HepG2 (cell line): ENCODE measurements at regions of chr20 and their contacts with region 1.

Region 1: GRCh38 chr20:39049684-39050554 is 87.8 kb downstream of the DHX35 start:
- DNase-seq: peak; percentile 75
- ATAC-seq: peak; percentile 86
- H3K4me3 ChIP-seq: peak overlapping the region; percentile 63 to 89 (median 76)
- H3K27ac ChIP-seq: no peak overlapping the region
- H3K4me1 ChIP-seq: peaks cover 22% of the 10 kb centered on the region
- H3K27me3 ChIP-seq: peaks cover 0 to 7% of the 10 kb centered on the region in 2 experiments; a peak in 2 of 5 replicates
- CTCF ChIP-seq: peak; percentile 100
- EP300 ChIP-seq: 0 out of 4 replicates have a peak, but pooled peaks of 1 of the 2 experiments have one; percentile 52
- POLR2A ChIP-seq: peak; percentile 70 to 75; a peak in 3 of 4 replicates
- RAD21 ChIP-seq: peak; percentile 99

Region 2: DNA sequence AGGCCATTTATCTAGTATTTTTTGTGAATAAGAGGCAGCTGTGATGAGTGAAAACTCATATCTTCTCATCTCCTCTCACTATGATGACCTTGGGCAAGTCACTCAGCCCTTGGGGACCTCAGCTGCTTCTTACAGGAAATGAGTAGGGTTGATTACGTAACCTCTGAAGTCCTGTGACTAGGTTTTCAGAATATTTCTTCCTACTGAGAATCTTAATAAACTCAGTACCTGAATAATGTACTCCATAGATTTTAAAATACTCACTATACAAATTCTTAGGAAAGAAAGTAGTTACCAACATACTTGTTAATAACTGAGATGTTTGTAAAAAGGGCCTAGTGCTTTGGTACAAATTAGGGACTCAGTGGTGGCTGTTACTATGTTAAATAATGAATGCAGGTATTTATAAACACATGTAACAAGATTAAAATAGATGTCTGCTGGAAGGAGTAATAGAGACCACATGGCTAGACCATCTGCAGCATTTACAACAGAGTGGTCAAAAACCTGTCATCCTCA is 955.5 kb before region 1 on chr20:
- CTCF ChIA-PET with region 1: no interaction called
- POLR2A ChIA-PET with region 1: no interaction called
- in situ Hi-C with region 1: no loop called
- intact Hi-C with region 1: no loop called
- DNase-seq: peak; percentile 52
- ATAC-seq: no peak
- H3K4me3 ChIP-seq: no peak overlapping the region; a peak in 1 of 6 replicates
- H3K27ac ChIP-seq: peak overlapping the region; percentile 66
- H3K4me1 ChIP-seq: peaks cover 49% of the 10 kb centered on the region
- H3K27me3 ChIP-seq: no peaks in the 10 kb centered on the region
- CTCF ChIP-seq: no peak
- EP300 ChIP-seq: 0 out of 4 replicates have a peak, but pooled peaks of 1 of the 2 experiments have one; percentile 57
- POLR2A ChIP-seq: no peak
- RAD21 ChIP-seq: no peak

Region 3: DNA sequence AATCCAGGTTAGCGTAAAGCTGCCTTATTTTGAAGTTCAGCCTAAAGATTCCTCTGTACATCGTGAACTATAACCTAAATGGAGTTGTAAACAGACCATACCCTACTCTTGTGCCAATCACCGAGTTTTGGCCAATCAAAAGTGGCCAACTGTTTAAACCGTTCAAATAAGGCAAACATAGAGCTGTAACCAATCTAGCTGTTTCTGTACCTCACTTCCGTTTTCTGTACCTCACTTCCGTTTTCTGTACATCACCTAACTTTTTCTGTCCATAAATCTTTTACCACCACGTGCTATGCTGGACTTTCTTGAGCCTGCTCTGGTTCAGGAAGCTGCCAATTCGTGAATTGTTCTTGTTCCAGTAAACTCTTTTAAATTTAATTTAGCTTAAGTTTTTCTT is 663.9 kb before region 1 on chr20:
- CTCF ChIA-PET with region 1: no interaction called
- POLR2A ChIA-PET with region 1: no interaction called
- in situ Hi-C with region 1: no loop called
- intact Hi-C with region 1: no loop called
- DNase-seq: no peak
- ATAC-seq: no peak
- H3K4me3 ChIP-seq: no peak overlapping the region
- H3K27ac ChIP-seq: no peak overlapping the region
- H3K4me1 ChIP-seq: no peaks in the 10 kb centered on the region
- H3K27me3 ChIP-seq: peaks cover 0 to 3% of the 10 kb centered on the region in 2 experiments; a peak in 1 of 5 replicates
- CTCF ChIP-seq: no peak
- EP300 ChIP-seq: no peak
- POLR2A ChIP-seq: no peak
- RAD21 ChIP-seq: no peak

Region 4: GRCh38 chr20:38730989-38731737 is 318.8 kb before region 1 on chr20:
- CTCF ChIA-PET with region 1: no interaction called
- POLR2A ChIA-PET with region 1: no interaction called
- in situ Hi-C with region 1: no loop called
- intact Hi-C with region 1: loop called (anchors 1 kb)
- DNase-seq: peak; percentile 62
- ATAC-seq: peak; percentile 85
- H3K4me3 ChIP-seq: peak overlapping the region; percentile 10 to 71 (median 33)
- H3K27ac ChIP-seq: no peak overlapping the region
- H3K4me1 ChIP-seq: peaks cover 15% of the 10 kb centered on the region
- H3K27me3 ChIP-seq: peaks cover 35 to 82% of the 10 kb centered on the region in 2 experiments
- CTCF ChIP-seq: peak; percentile 99
- EP300 ChIP-seq: 0 out of 4 replicates have a peak, but pooled peaks of 1 of the 2 experiments have one; percentile 30
- POLR2A ChIP-seq: no peak
- RAD21 ChIP-seq: peak; percentile 82

Region 5: DNA sequence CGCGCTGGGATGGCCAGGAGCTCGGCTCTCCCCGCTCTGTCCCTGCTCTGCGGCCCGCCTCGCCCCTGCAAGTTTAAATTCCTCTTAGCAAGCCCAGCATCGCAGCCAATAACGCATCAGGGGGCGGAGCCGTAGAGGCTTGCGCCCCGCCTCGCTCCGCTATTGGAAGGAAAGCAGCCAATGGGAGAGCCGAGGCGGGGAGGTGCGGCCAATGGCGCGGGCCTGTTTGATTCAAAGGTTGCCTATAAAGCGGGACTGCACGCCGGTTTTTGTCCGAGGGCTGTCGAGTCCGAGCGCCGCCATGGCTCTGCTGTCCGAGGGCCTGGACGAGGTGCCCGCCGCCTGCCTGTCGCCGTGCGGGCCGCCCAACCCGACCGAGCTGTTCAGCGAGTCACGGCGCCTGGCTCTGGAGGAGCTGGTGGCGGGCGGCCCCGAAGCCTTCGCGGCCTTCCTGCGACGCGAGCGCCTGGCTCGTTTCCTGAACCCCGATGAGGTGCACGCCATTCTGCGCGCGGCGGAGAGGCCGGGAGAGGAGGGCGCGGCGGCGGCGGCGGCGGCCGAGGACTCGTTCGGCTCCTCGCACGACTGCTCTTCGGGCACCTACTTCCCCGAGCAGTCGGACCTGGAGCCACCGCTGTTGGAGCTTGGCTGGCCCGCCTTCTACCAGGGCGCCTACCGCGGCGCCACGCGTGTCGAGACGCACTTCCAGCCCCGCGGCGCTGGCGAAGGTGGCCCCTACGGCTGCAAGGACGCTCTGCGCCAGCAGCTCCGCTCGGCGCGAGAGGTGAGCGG is 123.6 kb before region 1 on chr20 and contains the start of gene FAM83D:
- CTCF ChIA-PET with region 1: interaction called, 21 read pairs
- POLR2A ChIA-PET with region 1: interaction called, 5 read pairs
- in situ Hi-C with region 1: loop called (anchors 5 kb)
- intact Hi-C with region 1: loop called (anchors 1 kb)
- DNase-seq: peak; percentile 99
- ATAC-seq: peak; percentile 93
- H3K4me3 ChIP-seq: peak within 1 kb of the TSS; percentile 85 to 99 (median 95)
- H3K27ac ChIP-seq: peak within 1 kb of the TSS; percentile 73
- H3K4me1 ChIP-seq: peaks cover 57% of the 10 kb centered on the region
- H3K27me3 ChIP-seq: peaks cover 0 to 8% of the 10 kb centered on the region in 2 experiments; a peak in 2 of 5 replicates
- CTCF ChIP-seq: no peak
- EP300 ChIP-seq: peak in 1 of 2 experiments; percentile 40; a peak in 2 of 4 replicates
- POLR2A ChIP-seq: peak; percentile 100
- RAD21 ChIP-seq: peak; percentile 99
- total RNA-seq, gene FAM83D: 64.0 and 76.5 TPM in 2 replicates

Region 6: GRCh38 chr20:39010496-39010895 is 39.4 kb before region 1 on chr20:
- CTCF ChIA-PET with region 1: no interaction called
- POLR2A ChIA-PET with region 1: interaction called, 6 read pairs
- in situ Hi-C with region 1: no loop called
- intact Hi-C with region 1: loop called (anchors 2 kb)
- DNase-seq: no peak
- ATAC-seq: no peak
- H3K4me3 ChIP-seq: no peak overlapping the region
- H3K27ac ChIP-seq: no peak overlapping the region
- H3K4me1 ChIP-seq: peaks cover 22% of the 10 kb centered on the region
- H3K27me3 ChIP-seq: no peaks in the 10 kb centered on the region
- CTCF ChIP-seq: no peak
- EP300 ChIP-seq: no peak
- POLR2A ChIP-seq: no peak
- RAD21 ChIP-seq: no peak

Region 7: DNA sequence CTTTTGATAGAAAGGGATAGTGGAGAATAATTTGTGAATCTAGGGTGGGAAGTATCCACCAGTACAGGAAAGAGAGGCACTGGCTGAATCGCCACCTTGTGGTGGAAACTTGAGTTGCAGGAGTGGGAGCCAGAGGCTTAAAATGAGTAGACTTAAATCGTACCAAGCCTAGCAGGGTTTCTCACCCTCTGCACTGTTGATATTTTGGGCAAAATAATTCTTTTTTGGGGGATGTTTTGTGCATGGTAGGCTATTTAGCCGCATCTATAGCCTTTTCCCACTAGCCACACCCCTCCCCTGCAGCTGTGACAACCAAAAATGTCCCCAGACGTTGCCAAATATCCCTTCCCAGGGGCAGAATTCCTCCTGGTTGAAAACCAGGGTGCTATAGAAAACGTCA is 31.3 kb after region 1 on chr20:
- CTCF ChIA-PET with region 1: interaction called, 96 read pairs
- POLR2A ChIA-PET with region 1: interaction called, 11 read pairs
- in situ Hi-C with region 1: loop called (anchors 5 kb)
- intact Hi-C with region 1: loop called (anchors 1 kb)
- DNase-seq: peak; percentile 75
- ATAC-seq: peak; percentile 90
- H3K4me3 ChIP-seq: no peak overlapping the region
- H3K27ac ChIP-seq: no peak overlapping the region
- H3K4me1 ChIP-seq: no peaks in the 10 kb centered on the region
- H3K27me3 ChIP-seq: peaks cover 3 to 28% of the 10 kb centered on the region in 2 experiments; a peak in 3 of 5 replicates
- CTCF ChIP-seq: peak; percentile 91
- EP300 ChIP-seq: no peak
- POLR2A ChIP-seq: no peak
- RAD21 ChIP-seq: peak; percentile 81